Heart right ventricle (tissue), 16 donors: ENCODE measurements at regions of chr1 and their contacts with region 1.

Region 1: DNA sequence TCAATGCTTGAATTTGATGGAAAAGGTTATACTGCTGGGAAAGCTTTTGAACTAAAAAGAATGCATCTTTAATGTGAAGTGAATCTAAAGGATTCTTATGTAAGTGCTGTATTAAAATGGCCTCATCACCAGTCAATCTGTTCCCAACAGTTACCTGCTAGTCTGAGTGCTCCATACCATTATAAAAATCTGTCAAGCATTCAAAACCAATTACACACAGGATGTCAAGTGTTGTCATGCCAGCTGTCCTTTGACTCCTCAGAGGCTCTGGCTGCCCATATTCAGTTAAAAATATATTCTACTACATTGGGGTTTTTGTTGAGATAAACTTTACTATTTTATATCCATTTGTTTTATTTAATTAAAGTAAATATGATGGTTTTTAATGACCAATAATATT is 1587.7 kb downstream of the AMY1C start:
- DNase-seq: no peak
- ATAC-seq: no peak
- H3K4me3 ChIP-seq: no peak overlapping the region
- H3K27ac ChIP-seq: no peak overlapping the region
- H3K4me1 ChIP-seq: no peaks in the 10 kb centered on the region
- H3K27me3 ChIP-seq: no peaks in the 10 kb centered on the region
- CTCF ChIP-seq: no peak

Region 2: GRCh38 chr1:105386489-105386888 is 49.1 kb after region 1 on chr1:
- intact Hi-C with region 1: loop called in 1 of 10 experiments (anchors 1 kb)
- DNase-seq: peak in 1 of 2 donors; percentile 31
- ATAC-seq: peak; percentile 79 to 98 (median 88)
- H3K4me3 ChIP-seq: no peak overlapping the region
- H3K27ac ChIP-seq: no peak overlapping the region
- H3K4me1 ChIP-seq: peaks cover 0 to 3% (median 0%) of the 10 kb centered on the region in 9 donors
- H3K27me3 ChIP-seq: no peaks in the 10 kb centered on the region
- CTCF ChIP-seq: no peak